Activated naive CD8-positive, alpha-beta T cell treated with anti-CD3 and anti-CD28 coated beads, Interleukin-2, amount 10 ng/mL, durations not matched to agents 7 days and 5 days (primary cell): ENCODE measurements at regions of chr6 and their contacts with region 1.

Region 1: DNA sequence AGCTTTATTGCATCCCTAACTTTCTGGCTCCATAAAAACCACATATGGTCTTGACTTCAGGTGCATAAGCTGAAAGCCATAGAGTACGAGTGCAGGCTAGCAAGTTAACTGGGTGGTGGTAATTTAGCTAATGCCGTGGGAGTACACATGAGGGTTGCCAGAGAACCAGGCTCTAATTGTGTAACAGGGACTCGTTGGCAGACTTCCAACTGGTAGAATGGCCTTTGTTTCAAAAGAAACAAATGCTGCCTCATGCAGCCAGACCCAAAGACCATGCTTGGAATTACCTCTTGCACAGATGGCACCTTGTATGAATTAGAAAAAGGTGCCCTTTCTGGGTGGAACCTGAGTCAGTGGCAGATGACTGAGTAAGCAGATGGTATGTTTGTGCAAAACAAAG is 73.2 kb downstream of the LY86 start:
- DNase-seq: no peak
- ATAC-seq: no peak
- H3K4me3 Mint-ChIP-seq: no peak overlapping the region
- H3K27ac Mint-ChIP-seq: peak overlapping the region; percentile 98
- H3K4me1 Mint-ChIP-seq: peaks cover 55% of the 10 kb centered on the region
- H3K27me3 Mint-ChIP-seq: no peaks in the 10 kb centered on the region

Region 2: GRCh38 chr6:6588064-6588923 is 73.4 kb before region 1 on chr6 and contains the start of gene LY86:
- POLR2A ChIA-PET with region 1: interaction called, 24 read pairs
- DNase-seq: peak; percentile 64
- ATAC-seq: peak; percentile 62
- H3K4me3 Mint-ChIP-seq: peak within 1 kb of the TSS; percentile 88
- H3K27ac Mint-ChIP-seq: peak within 1 kb of the TSS; percentile 99
- H3K4me1 Mint-ChIP-seq: peaks cover 77% of the 10 kb centered on the region
- H3K27me3 Mint-ChIP-seq: no peaks in the 10 kb centered on the region
- total RNA-seq, gene LY86: 5.5 to 5.7 TPM

Region 3: GRCh38 chr6:6604566-6604965 is 57.1 kb before region 1 on chr6:
- POLR2A ChIA-PET with region 1: interaction called, 212 read pairs
- DNase-seq: no peak
- ATAC-seq: no peak
- H3K4me3 Mint-ChIP-seq: peak overlapping the region; percentile 14
- H3K27ac Mint-ChIP-seq: no peak overlapping the region
- H3K4me1 Mint-ChIP-seq: peaks cover 25% of the 10 kb centered on the region
- H3K27me3 Mint-ChIP-seq: no peaks in the 10 kb centered on the region

Region 4: GRCh38 chr6:6699741-6700367 is 38.2 kb after region 1 on chr6:
- POLR2A ChIA-PET with region 1: no interaction called
- DNase-seq: no peak
- ATAC-seq: no peak
- H3K4me3 Mint-ChIP-seq: no peak overlapping the region
- H3K27ac Mint-ChIP-seq: no peak overlapping the region
- H3K4me1 Mint-ChIP-seq: peaks cover 31% of the 10 kb centered on the region
- H3K27me3 Mint-ChIP-seq: peaks cover 18% of the 10 kb centered on the region

Region 5: DNA sequence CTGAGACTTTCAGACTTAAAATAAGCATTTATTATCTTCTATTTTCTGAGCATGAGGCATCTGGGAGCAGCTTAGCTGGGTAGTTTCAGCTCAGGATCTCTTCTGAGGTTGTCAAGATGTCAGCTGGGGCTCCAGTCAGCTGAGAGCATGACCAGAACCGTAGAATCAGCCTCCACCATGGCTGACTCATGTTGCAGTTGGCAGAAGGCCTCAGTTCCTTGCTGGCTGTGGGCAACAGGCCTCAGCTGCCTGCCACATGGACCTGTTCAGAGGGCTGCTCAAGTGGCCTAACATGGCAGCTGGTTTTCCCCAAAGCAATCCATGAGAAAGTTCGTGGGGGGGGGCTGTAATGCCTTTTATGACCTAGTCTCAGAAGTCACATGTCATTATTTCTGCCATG is 69.1 kb after region 1 on chr6:
- POLR2A ChIA-PET with region 1: no interaction called
- DNase-seq: no peak
- ATAC-seq: no peak
- H3K4me3 Mint-ChIP-seq: no peak overlapping the region
- H3K27ac Mint-ChIP-seq: no peak overlapping the region
- H3K4me1 Mint-ChIP-seq: peaks cover 5% of the 10 kb centered on the region
- H3K27me3 Mint-ChIP-seq: peaks cover 31% of the 10 kb centered on the region